HepG2 (cell line): ENCODE measurements at regions of chr5 and their contacts with region 1.

Region 1: DNA sequence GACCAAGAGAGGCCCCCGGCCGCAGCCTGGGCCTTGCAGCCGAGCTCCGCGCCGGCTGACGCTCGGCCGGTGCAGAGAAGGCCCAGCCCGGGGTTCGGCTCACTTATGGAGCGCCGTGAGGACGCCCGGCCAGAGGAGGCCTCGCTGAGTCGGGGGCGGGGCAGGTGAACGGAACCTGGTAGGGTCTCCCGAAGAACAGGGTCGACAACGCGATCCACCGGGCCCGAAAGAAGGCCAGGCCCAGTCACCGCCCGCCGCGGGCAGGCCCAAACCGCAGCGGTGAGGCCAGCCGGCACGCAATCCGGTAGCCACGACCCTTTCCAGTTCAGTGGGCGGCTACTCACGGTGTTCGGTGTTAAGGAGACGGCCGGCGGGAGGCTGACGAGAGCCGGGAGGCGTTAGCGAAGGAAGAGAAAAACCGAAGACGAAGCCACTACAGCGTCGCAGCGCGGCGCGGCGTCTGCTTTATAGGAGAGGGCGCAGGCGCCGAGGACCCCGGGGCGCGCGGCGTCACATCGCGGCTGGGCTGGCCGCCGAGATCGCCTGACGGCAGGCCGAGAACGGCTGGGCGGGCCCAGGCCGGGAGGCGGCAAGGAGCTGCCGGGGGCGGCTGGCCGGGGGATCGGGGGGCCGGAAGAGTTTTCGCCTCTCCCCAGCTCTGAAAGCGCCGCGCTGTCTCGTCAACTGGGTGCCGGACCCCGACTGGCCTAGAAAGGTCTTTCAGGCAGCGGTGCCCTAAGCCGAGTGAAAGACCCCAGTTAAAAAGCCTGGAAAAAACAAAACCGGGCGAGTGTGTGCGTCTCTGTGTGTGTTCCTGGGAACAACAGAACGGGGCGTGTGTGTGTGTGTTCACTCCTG is at the start of gene SKP1:
- DNase-seq: peak; percentile 68
- ATAC-seq: peak; percentile 78
- H3K4me3 ChIP-seq: peak within 1 kb of the TSS; percentile 95 to 97 (median 97)
- H3K27ac ChIP-seq: peak within 1 kb of the TSS; percentile 98
- H3K4me1 ChIP-seq: peaks cover 45% of the 10 kb centered on the region
- H3K27me3 ChIP-seq: no peaks in the 10 kb centered on the region
- CTCF ChIP-seq: peak; percentile 33
- EP300 ChIP-seq: no peak
- POLR2A ChIP-seq: peak; percentile 94 to 99
- RAD21 ChIP-seq: no peak
- total RNA-seq, gene SKP1: 340 and 507 TPM in 2 replicates

Region 2: DNA sequence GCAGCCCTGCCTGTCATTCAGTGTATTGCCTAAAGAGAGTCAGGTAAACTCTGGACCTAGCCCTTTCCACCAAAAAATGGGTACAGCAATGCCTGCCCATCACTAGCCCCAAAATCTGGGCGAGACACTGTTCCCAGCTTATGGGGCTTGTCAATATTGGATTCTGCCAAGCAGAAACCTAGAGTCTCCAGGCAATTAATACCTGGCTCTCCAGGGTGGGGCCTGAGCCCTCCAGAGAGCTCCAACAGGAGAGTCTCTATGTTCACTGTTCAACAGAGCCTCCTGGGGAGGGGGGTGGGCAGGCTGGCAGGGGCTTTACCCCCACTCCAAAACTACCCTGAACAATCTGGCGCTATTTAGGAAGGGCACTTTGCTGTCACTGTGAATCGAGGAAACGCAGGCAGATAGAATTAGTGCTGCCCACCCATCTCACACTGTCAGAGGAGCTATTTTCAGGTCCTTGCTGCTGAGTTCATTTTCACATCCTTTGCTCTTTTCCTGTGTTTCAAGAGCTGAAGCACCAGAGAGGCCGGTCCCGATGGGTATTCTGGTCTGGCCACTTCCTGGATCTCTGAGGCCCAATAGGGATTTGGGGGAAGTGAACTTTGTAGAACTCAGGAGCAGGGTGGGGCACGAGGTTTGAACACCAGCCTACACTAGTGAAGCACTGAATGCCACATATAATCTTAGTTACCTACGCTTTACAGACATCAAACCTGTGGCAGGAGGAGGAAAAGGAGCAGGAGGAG is 330.1 kb before region 1 on chr5:
- CTCF ChIA-PET with region 1: no interaction called
- POLR2A ChIA-PET with region 1: no interaction called
- in situ Hi-C with region 1: no loop called
- intact Hi-C with region 1: no loop called
- DNase-seq: no peak
- ATAC-seq: no peak
- H3K4me3 ChIP-seq: no peak overlapping the region
- H3K27ac ChIP-seq: no peak overlapping the region
- H3K4me1 ChIP-seq: no peaks in the 10 kb centered on the region
- H3K27me3 ChIP-seq: peaks cover 0 to 10% of the 10 kb centered on the region in 2 experiments; a peak in 1 of 5 replicates
- CTCF ChIP-seq: no peak
- EP300 ChIP-seq: no peak
- POLR2A ChIP-seq: no peak
- RAD21 ChIP-seq: no peak

Region 3: GRCh38 chr5:134209477-134210240 is 32.9 kb after region 1 on chr5:
- CTCF ChIA-PET with region 1: no interaction called
- POLR2A ChIA-PET with region 1: no interaction called
- in situ Hi-C with region 1: no loop called
- intact Hi-C with region 1: no loop called
- DNase-seq: no peak
- ATAC-seq: no peak
- H3K4me3 ChIP-seq: no peak overlapping the region
- H3K27ac ChIP-seq: no peak overlapping the region
- H3K4me1 ChIP-seq: no peaks in the 10 kb centered on the region; the same call in 1 of the 2 replicates
- H3K27me3 ChIP-seq: no peaks in the 10 kb centered on the region
- CTCF ChIP-seq: no peak
- EP300 ChIP-seq: no peak
- POLR2A ChIP-seq: no peak
- RAD21 ChIP-seq: no peak

Region 4: GRCh38 chr5:134240421-134240962 is 63.8 kb after region 1 on chr5:
- CTCF ChIA-PET with region 1: no interaction called
- POLR2A ChIA-PET with region 1: interaction called, 15 read pairs
- in situ Hi-C with region 1: no loop called
- intact Hi-C with region 1: no loop called
- DNase-seq: peak; percentile 44
- ATAC-seq: peak; percentile 65
- H3K4me3 ChIP-seq: peak overlapping the region in 2 of 3 experiments; percentile 37 to 38; a peak in 2 of 6 replicates
- H3K27ac ChIP-seq: no peak overlapping the region
- H3K4me1 ChIP-seq: peaks cover 44% of the 10 kb centered on the region
- H3K27me3 ChIP-seq: no peaks in the 10 kb centered on the region
- CTCF ChIP-seq: no peak
- EP300 ChIP-seq: no peak
- POLR2A ChIP-seq: no peak
- RAD21 ChIP-seq: no peak